ENCODE measurements at regions of chr7 and their contacts with region 1.

Region 1: GRCh38 chr7:31735991-31736982 is 49.3 kb downstream of the PPP1R17 start:
- DNase-seq: no peak
- ATAC-seq: no peak
- H3K4me3 Mint-ChIP-seq: no peak overlapping the region
- H3K27ac Mint-ChIP-seq: no peak overlapping the region
- H3K4me1 Mint-ChIP-seq: no peaks in the 10 kb centered on the region
- H3K27me3 Mint-ChIP-seq: no peaks in the 10 kb centered on the region
- CTCF ChIP-seq: no peak

Region 2: DNA sequence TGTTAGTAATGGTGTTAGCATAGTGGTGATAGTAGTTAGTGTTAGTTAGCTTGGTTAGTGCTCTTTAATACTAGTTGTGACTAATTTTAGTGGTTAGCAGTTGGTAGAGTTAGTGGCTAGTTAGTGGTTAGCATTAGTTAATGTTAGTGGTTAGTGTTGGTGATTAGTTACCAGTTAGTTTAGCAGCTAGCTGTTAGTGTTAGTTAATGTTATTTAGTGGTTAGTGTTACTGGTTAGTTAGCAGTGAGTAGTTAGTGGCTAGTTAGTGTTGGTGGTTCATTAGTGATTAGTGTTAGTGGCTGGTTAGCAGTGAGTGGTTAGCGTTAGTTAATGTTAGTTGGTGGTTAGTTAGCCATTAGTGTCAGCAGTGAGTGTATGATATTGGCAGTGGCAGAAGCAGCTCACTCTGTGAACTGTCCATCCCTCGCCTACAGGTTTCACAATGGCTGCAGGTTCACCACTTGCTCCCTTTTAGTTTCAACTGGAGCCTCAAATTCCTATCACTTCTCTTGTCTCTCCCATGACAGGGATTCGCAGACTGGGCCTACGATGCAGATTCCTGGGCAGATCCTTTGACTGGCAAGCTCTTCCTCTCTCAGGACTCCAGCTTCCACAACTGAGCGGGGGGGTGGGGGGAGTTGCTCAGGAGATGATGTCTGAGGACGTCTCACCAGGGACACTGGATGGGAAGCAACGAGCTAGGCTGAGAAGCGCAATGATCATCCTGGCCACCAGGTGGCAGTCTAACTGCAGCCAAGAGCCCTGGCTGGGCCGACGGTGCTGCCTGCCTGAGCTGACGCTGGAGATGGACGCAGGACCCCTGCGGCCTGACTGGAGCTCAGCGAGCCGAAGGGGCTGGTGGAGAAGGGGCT is 753.0 kb before region 1 on chr7:
- CTCF ChIA-PET with region 1: no interaction called
- POLR2A ChIA-PET with region 1: no interaction called
- intact Hi-C with region 1: loop called (anchors 2 kb)
- DNase-seq: peak; percentile 60
- ATAC-seq: peak; percentile 82
- H3K4me3 Mint-ChIP-seq: no peak overlapping the region
- H3K27ac Mint-ChIP-seq: no peak overlapping the region
- H3K4me1 Mint-ChIP-seq: peaks cover 2% of the 10 kb centered on the region
- H3K27me3 Mint-ChIP-seq: peaks cover 36% of the 10 kb centered on the region
- CTCF ChIP-seq: peak; percentile 96